ENCODE measurements at regions of chr19 and their contacts with region 1.

Region 1: GRCh38 chr19:52189735-52190486 is at the start of gene PPP2R1A:
- DNase-seq: peak; percentile 100
- H3K4me3 ChIP-seq: peak within 1 kb of the TSS; percentile 74 to 95 (median 95)
- H3K27ac ChIP-seq: peak within 1 kb of the TSS; percentile 97
- H3K4me1 ChIP-seq: peaks cover 16% of the 10 kb centered on the region
- H3K27me3 ChIP-seq: no peaks in the 10 kb centered on the region
- CTCF ChIP-seq: no peak
- POLR2A ChIP-seq: peak; percentile 61
- total RNA-seq, gene PPP2R1A: 253 and 257 TPM in 2 replicates

Region 2: GRCh38 chr19:51926784-51927742 is 262.8 kb before region 1 on chr19 and contains the start of gene ZNF613:
- CTCF ChIA-PET with region 1: no interaction called
- POLR2A ChIA-PET with region 1: no interaction called
- dilution Hi-C with region 1: no loop called
- intact Hi-C with region 1: loop called (anchors 1 kb)
- DNase-seq: peak; percentile 94
- H3K4me3 ChIP-seq: peak within 1 kb of the TSS; percentile 52 to 82 (median 75)
- H3K27ac ChIP-seq: peak within 1 kb of the TSS; percentile 25
- H3K4me1 ChIP-seq: peaks cover 8% of the 10 kb centered on the region
- H3K27me3 ChIP-seq: no peaks in the 10 kb centered on the region
- CTCF ChIP-seq: no peak
- POLR2A ChIP-seq: peak; percentile 50
- total RNA-seq, gene ZNF613: 4.4 and 6.5 TPM in 2 replicates

Region 3: DNA sequence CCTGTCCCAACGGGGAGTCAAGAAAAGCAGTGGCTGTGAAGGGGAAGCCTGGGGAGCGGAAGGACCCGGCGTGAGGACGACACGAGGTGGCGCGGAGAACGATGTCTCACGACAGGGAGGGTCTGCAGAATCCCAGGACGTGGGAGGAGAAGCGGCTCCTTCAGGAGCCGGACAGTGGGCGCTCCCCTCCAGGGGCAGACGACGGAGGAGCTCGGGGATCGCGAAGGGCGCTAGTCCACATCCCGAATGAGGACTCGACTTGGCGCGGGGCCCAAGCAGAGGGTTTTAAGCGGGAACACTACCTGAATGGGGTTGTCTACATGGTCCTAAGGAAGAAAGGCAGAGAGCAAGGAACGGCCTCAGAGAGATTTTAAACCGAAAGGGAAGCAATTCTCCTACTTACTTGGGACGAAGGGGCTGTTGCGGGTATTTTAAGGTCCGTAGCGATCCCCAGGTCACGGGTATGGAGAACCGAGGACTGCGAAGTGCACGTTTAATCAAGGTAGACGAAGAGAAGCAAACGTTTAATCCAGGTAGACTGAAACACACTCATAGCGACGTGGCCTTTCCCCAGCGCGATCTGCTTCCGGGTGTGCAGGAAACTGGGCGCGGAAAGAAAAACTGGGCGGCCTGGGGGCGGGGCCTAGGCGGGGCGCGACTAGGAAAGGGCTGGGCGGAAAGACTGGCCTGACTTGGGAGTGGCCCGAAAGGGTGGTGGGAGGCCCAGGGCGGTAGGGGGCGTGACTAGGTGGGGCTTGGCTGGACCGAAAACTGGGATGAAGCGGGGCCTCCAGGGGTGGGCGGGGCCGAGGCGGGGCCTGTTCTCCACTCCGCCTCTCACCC is 94.5 kb before region 1 on chr19 and contains the start of gene ZNF841:
- CTCF ChIA-PET with region 1: no interaction called
- POLR2A ChIA-PET with region 1: no interaction called
- dilution Hi-C with region 1: no loop called
- intact Hi-C with region 1: loop called (anchors 1 kb)
- DNase-seq: peak; percentile 96
- H3K4me3 ChIP-seq: peak within 1 kb of the TSS; percentile 47 to 94 (median 70)
- H3K27ac ChIP-seq: peak within 1 kb of the TSS; percentile 62
- H3K4me1 ChIP-seq: peaks cover 2% of the 10 kb centered on the region
- H3K27me3 ChIP-seq: no peaks in the 10 kb centered on the region
- CTCF ChIP-seq: no peak
- POLR2A ChIP-seq: peak; percentile 63
- total RNA-seq, gene ZNF841: 17.7 and 18.6 TPM in 2 replicates

Region 4: DNA sequence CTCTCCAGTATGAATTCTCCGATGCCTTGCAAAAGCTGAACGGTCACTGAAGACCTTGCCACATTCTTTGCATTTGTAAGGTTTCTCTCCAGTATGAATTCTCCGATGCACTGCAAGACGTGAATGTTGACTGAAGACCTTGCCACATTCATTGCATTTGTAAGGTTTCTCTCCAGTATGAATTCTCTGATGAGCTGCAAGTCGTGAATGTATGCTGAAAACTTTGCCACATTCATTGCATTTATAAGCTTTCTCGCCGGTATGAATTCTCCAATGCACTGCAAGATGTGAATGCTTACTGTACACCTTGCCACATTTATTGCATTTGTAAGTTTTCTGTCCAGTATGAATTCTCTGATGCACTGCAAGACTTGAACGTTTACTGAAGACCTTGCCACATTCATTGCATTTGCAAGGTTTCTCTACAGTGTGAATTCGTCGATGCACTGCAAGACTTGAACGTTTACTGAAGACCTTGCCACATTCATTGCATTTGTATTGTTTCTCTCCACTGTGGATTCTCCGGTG is 74.3 kb before region 1 on chr19:
- CTCF ChIA-PET with region 1: no interaction called
- POLR2A ChIA-PET with region 1: no interaction called
- dilution Hi-C with region 1: no loop called
- intact Hi-C with region 1: no loop called
- DNase-seq: no peak
- H3K4me3 ChIP-seq: no peak overlapping the region
- H3K27ac ChIP-seq: no peak overlapping the region
- H3K4me1 ChIP-seq: no peaks in the 10 kb centered on the region
- H3K27me3 ChIP-seq: no peaks in the 10 kb centered on the region
- CTCF ChIP-seq: no peak
- POLR2A ChIP-seq: no peak

Region 5: DNA sequence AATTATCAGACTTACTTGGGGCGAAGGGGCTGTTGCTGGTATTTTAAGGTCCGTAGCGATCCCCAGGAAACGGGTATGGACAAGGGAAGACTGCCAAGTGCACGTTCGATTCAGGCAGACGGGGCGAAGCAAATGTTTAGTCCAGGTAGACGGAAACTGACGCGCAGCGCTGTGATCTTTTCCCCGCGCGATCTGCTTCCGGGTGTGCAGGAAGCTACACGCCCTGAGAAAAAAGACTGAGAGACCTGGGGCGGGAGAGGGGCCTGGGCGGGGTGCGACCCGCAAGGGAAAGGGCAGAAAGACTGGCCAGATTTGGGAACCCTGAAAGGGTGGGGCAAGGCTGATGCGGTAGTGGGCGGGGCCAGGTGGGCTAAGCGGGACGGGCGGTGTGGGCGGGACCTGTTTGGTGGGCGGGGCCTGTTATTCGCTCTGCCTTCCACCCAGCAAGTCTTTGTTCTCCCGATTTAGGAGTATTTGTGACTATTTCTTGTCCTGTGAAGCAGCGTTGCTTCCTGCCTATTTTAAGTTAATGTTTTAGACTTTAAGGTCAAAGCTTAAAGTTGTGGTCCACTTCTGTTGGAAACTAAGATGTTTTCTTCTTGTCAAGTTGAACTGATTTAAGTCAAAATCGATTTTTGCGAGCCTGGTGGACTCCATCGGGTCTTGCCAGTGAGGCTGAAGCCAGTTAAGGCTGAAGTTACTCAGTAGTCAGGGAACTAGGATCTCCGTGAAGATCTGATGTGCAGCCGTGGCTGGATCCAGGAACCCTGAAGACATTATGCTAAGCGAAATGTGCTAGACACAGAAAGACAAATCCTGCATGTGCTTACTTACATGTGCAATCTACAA is 18.4 kb before region 1 on chr19 and contains the start of gene ZNF836:
- CTCF ChIA-PET with region 1: interaction called, 4 read pairs
- POLR2A ChIA-PET with region 1: interaction called, 6 read pairs
- dilution Hi-C with region 1: no loop called
- intact Hi-C with region 1: loop called (anchors 1 kb)
- DNase-seq: peak; percentile 81
- H3K4me3 ChIP-seq: peak within 1 kb of the TSS; percentile 88 to 95 (median 93)
- H3K27ac ChIP-seq: peak within 1 kb of the TSS; percentile 22
- H3K4me1 ChIP-seq: peaks cover 4% of the 10 kb centered on the region
- H3K27me3 ChIP-seq: no peaks in the 10 kb centered on the region
- CTCF ChIP-seq: no peak
- POLR2A ChIP-seq: peak; percentile 55
- total RNA-seq, gene ZNF836: 7.2 and 9.3 TPM in 2 replicates

Region 6: GRCh38 chr19:52211926-52212571 is 22.1 kb after region 1 on chr19:
- CTCF ChIA-PET with region 1: no interaction called
- POLR2A ChIA-PET with region 1: no interaction called
- dilution Hi-C with region 1: no loop called
- intact Hi-C with region 1: no loop called
- DNase-seq: no peak
- H3K4me3 ChIP-seq: no peak overlapping the region
- H3K27ac ChIP-seq: no peak overlapping the region
- H3K4me1 ChIP-seq: no peaks in the 10 kb centered on the region
- H3K27me3 ChIP-seq: no peaks in the 10 kb centered on the region
- CTCF ChIP-seq: no peak
- POLR2A ChIP-seq: no peak

Region 7: DNA sequence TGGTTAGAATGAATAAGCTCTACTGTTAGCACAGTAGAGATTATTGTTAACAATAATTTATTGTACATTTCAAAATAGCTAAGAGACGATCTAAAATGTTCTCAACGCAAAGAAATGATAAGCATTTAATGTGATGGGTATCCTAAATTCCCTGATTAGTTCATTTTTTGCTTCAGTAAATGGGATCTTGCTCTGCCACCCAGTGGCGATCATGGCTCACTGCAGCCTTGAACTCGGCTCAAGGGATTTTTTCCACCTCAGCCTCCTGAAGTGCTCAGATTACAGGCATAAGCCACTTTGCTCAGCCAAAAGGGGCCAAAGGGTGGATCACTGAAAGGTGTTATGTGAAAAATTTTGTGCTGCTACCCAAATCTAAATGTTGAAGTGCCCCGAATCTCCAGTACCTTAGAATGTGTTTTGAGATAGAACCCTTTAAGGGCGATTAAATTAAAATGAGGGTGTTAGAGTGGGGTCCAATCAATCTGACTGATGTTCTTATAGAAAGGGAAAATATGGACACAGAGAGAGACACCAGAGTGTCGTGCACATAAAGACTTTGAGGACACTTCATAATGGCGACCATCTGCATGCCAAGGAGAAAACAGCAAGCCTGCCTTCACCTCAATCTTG is 48.0 kb after region 1 on chr19:
- CTCF ChIA-PET with region 1: interaction called, 5 read pairs
- POLR2A ChIA-PET with region 1: no interaction called
- dilution Hi-C with region 1: no loop called
- intact Hi-C with region 1: loop called (anchors 5 kb)
- DNase-seq: peak; percentile 69
- H3K4me3 ChIP-seq: no peak overlapping the region
- H3K27ac ChIP-seq: no peak overlapping the region
- H3K4me1 ChIP-seq: no peaks in the 10 kb centered on the region
- H3K27me3 ChIP-seq: no peaks in the 10 kb centered on the region
- CTCF ChIP-seq: peak; percentile 76 to 86
- POLR2A ChIP-seq: no peak

Measured in endothelial cell of umbilical vein (primary cell).